WTC11 (cell line): ENCODE measurements at regions of chr10 and their contacts with region 1.

Region 1: GRCh38 chr10:14200698-14201544 is 129.8 kb downstream of the FRMD4A start:
- DNase-seq: peak; percentile 80
- ATAC-seq: peak; percentile 81
- H3K4me3 Mint-ChIP-seq: no peak overlapping the region
- H3K27ac Mint-ChIP-seq: peak overlapping the region; percentile 48
- H3K4me1 Mint-ChIP-seq: peaks cover 25% of the 10 kb centered on the region
- H3K27me3 Mint-ChIP-seq: no peaks in the 10 kb centered on the region
- CTCF ChIP-seq: peak; percentile 81

Region 2: DNA sequence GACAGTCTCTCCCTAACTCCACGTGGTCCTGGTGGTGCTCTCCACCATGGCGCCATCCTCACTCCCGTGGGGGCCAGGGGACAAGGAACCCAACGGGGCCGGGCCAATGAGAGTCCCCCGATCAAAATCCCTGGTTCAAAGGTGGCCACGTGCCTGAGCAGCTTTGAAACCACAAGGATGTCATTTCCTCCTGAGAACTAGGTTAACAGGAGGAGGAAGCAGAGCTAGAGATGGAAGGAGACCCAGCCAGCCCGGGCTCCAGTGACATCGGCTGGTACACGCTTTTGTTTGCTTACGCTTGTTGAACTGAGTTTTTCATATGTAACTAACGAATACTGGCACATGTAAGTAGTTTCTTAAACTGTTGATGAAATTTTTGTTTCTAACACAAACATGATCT is 552.5 kb before region 1 on chr10:
- CTCF ChIA-PET with region 1: no interaction called
- POLR2A ChIA-PET with region 1: no interaction called
- DNase-seq: no peak
- ATAC-seq: no peak
- H3K4me3 Mint-ChIP-seq: no peak overlapping the region
- H3K27ac Mint-ChIP-seq: no peak overlapping the region
- H3K4me1 Mint-ChIP-seq: no peaks in the 10 kb centered on the region
- H3K27me3 Mint-ChIP-seq: no peaks in the 10 kb centered on the region
- CTCF ChIP-seq: no peak

Region 3: GRCh38 chr10:14173706-14174594 is 27.0 kb before region 1 on chr10:
- CTCF ChIA-PET with region 1: interaction called, 13 read pairs
- POLR2A ChIA-PET with region 1: no interaction called
- DNase-seq: peak; percentile 27
- ATAC-seq: peak; percentile 85
- H3K4me3 Mint-ChIP-seq: peak overlapping the region; percentile 85
- H3K27ac Mint-ChIP-seq: no peak overlapping the region
- H3K4me1 Mint-ChIP-seq: peaks cover 19% of the 10 kb centered on the region
- H3K27me3 Mint-ChIP-seq: peaks cover 30% of the 10 kb centered on the region
- CTCF ChIP-seq: no peak

Region 4: DNA sequence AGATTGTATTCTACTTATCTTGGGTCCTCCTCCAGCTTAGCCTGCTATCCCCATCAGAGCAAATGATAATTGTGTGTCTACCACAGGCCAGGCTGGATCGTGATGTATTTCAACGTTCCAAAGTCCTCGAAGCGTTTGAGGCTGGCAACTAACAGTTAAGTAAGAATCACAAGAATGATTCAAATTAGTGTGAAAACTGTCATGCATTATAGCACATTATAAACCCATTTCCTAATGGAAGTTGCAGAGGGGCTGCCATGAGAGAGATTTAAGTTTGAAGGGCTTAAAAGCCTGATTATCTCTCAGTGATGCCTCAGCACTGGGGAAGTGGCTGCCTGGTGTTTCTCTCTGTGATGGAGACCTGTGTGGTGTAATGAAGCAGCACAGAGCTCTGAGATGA is 10.7 kb after region 1 on chr10:
- CTCF ChIA-PET with region 1: interaction called, 11 read pairs
- POLR2A ChIA-PET with region 1: no interaction called
- DNase-seq: no peak
- ATAC-seq: no peak
- H3K4me3 Mint-ChIP-seq: no peak overlapping the region
- H3K27ac Mint-ChIP-seq: no peak overlapping the region
- H3K4me1 Mint-ChIP-seq: no peaks in the 10 kb centered on the region
- H3K27me3 Mint-ChIP-seq: no peaks in the 10 kb centered on the region
- CTCF ChIP-seq: no peak

Region 5: DNA sequence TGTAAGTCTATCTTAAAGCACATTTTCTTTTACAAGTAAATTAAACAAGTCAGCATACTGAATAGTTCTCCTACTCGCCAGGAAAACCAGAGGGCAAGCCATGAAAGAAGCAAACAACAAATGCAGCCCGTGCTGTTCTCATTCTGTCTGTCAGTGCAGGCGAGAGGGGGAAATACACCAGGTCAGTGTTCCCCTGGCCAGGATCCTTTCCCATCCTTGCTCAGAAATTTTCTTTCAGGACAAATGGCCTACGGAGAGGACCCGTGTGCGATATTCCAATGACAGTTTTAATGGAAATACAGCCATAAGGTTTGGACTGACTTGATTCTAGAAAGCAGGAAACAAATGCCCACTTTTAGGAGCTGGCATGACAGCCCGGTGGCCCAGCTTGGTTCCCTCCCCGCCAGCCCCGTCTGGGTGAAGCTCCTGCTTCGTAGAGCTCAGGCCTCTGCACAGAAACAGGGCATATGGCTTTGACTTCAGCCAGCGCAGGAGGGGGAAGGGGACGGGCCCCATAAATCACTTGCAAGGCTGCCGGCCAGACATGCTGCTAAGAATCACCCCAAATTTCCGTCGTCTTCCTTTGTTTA is 62.0 kb after region 1 on chr10:
- CTCF ChIA-PET with region 1: interaction called, 12 read pairs
- POLR2A ChIA-PET with region 1: no interaction called
- DNase-seq: no peak
- ATAC-seq: no peak
- H3K4me3 Mint-ChIP-seq: no peak overlapping the region
- H3K27ac Mint-ChIP-seq: no peak overlapping the region
- H3K4me1 Mint-ChIP-seq: 0 out of 2 replicates have a peak, but pooled peaks cover 2% of the 10 kb centered on the region
- H3K27me3 Mint-ChIP-seq: no peaks in the 10 kb centered on the region
- CTCF ChIP-seq: no peak

Region 6: GRCh38 chr10:14329746-14330173 is 128.8 kb after region 1 on chr10:
- CTCF ChIA-PET with region 1: interaction called, 14 read pairs
- POLR2A ChIA-PET with region 1: no interaction called
- DNase-seq: peak; percentile 40
- ATAC-seq: peak; percentile 56
- H3K4me3 Mint-ChIP-seq: peak overlapping the region; percentile 41
- H3K27ac Mint-ChIP-seq: peak overlapping the region; percentile 50
- H3K4me1 Mint-ChIP-seq: peaks cover 44% of the 10 kb centered on the region
- H3K27me3 Mint-ChIP-seq: peaks cover 2% of the 10 kb centered on the region; the same call in 1 of the 2 replicates
- CTCF ChIP-seq: no peak

Region 7: DNA sequence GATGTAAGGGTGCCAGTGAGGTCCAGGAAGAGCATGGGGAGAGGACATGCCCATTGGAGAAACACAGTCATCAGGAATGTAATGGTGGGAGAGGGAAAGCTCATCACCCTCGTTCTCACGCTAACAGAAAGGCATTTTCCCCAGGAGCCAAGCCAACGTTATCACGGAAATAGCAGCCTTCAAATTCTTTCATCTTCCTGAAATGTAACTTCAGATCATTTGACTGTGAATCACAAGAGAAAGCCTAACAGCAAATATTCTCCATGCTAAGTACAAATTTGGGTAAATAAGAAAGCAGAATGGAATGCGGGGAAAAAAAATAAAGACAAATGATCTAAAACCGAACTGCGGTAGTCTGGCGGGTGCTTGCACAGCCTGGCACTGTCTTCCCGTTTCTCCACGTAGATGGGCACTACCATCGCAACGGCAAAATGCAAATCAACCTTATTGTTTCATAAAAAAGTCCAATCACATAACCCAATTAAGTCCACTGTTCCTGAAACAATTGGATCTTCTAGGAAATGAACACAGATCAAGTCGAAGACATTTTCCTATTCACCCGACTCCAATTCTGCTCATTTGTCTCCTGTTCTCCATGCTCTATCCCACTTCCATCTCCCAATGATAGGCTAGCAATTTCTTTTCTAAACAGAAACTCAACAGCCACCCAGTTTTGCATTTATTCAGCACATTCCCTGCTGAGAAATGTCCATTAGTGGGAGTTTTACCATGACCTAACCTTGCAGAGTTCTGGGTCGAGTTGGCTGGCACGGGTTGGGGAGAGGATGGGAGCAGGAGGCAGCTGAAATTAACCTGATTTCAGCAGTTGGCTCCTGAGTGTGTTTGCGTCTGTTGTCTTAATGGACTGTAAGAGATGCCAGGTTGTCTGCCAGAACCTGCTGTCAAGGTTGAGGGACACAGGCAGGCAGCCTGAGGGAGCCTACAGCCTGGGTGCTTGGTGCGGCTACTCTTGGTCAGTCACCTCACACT is 204.4 kb after region 1 on chr10:
- CTCF ChIA-PET with region 1: no interaction called
- POLR2A ChIA-PET with region 1: no interaction called
- DNase-seq: no peak
- ATAC-seq: no peak
- H3K4me3 Mint-ChIP-seq: no peak overlapping the region
- H3K27ac Mint-ChIP-seq: no peak overlapping the region
- H3K4me1 Mint-ChIP-seq: peaks cover 20% of the 10 kb centered on the region
- H3K27me3 Mint-ChIP-seq: peaks cover 2% of the 10 kb centered on the region; the same call in 1 of the 2 replicates
- CTCF ChIP-seq: no peak